Psoas muscle (tissue), 8 donors: ENCODE measurements at regions of chr6 and their contacts with region 1.

Region 1: GRCh38 chr6:7589949-7590917 is at the start of gene SNRNP48:
- DNase-seq: peak; percentile 94 to 97
- ATAC-seq: peak; percentile 100
- H3K4me3 ChIP-seq: peak within 1 kb of the TSS; percentile 90
- H3K27ac ChIP-seq: peak within 1 kb of the TSS; percentile 75
- H3K4me1 ChIP-seq: peaks cover 18% of the 10 kb centered on the region
- H3K27me3 ChIP-seq: no peaks in the 10 kb centered on the region
- CTCF ChIP-seq: no peak
- total RNA-seq, gene SNRNP48: 8.3 to 11.8 (median 10.1) TPM

Region 2: GRCh38 chr6:7285416-7285815 is 304.8 kb before region 1 on chr6:
- intact Hi-C with region 1: loop called in 1 of 2 experiments (anchors 5 kb)
- DNase-seq: no peak
- ATAC-seq: no peak
- H3K4me3 ChIP-seq: no peak overlapping the region
- H3K27ac ChIP-seq: no peak overlapping the region
- H3K4me1 ChIP-seq: no peaks in the 10 kb centered on the region
- H3K27me3 ChIP-seq: no peaks in the 10 kb centered on the region
- CTCF ChIP-seq: no peak

Region 3: DNA sequence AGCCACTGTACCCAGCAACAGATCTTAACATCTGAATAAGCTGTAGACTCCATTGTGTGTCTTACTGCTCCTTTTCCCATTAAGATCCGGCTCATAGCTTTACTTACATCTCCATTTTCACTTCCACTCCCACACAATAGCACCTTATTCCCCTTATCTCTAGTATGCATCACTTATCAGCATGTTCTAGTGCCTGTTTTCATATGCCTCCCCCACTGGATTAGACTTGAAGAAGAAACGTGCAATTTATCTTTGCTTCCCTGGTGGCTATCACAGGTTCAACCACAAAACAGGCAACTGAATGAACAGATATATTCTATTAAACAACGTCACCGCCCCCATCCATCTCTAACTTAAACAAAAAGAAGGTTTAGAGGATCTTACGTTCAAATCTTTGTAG is 289.3 kb before region 1 on chr6:
- intact Hi-C with region 1: no loop called
- DNase-seq: no peak
- ATAC-seq: no peak
- H3K4me3 ChIP-seq: no peak overlapping the region
- H3K27ac ChIP-seq: no peak overlapping the region
- H3K4me1 ChIP-seq: no peaks in the 10 kb centered on the region
- H3K27me3 ChIP-seq: no peaks in the 10 kb centered on the region
- CTCF ChIP-seq: no peak

Region 4: DNA sequence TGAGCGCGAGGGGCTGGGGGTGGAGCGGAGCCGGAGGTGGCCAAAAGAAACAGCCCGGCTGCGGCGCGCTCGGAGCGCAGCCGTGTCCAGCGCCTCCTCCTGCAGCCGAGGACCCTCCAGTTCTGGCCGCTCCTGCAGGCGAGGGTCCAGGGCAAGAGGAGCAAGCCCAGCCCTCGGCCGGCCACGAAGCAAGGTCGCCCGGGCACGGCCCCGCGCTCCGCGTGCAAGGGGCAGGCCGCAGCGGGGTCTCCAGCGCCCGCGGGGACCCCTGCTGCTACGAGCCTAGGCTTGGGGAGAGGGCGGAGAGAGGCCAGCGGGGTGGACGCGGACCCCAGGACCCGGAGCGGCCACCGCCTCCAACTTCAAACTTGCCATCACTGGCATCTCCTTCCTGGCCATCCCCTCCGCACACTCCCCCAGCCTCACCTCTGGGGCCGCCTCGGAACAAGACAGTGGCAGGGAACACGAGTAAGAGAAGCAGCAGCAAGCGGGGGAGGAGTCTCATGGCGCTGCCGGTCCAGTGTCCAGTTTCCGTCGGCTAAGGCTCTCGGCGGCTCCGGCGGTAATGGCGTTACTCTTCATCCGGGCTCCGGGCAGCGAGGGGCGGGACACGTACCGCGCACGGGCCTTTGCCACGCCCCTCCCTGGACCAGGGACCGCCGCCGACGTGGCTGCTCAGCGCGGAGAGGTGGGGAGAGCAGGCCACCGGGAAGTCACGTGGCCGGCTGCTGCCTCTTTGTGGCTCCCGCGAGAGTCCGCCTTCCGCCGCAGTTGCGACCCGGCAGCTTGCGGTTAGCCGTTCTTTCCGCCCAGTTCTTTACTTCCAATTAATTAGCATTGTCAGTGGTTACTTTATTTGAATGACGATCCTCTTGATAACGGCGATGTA is 277.4 kb before region 1 on chr6 and contains the start of gene SSR1:
- intact Hi-C with region 1: loop called in 1 of 2 experiments (anchors 10 kb)
- DNase-seq: peak; percentile 98 to 99
- ATAC-seq: peak; percentile 100
- H3K4me3 ChIP-seq: peak within 1 kb of the TSS; percentile 94
- H3K27ac ChIP-seq: peak within 1 kb of the TSS; percentile 90
- H3K4me1 ChIP-seq: peaks cover 20% of the 10 kb centered on the region
- H3K27me3 ChIP-seq: no peaks in the 10 kb centered on the region
- CTCF ChIP-seq: no peak
- total RNA-seq, gene SSR1: 29.9 to 37.3 (median 33.2) TPM

Region 5: GRCh38 chr6:7389451-7390225 is 200.6 kb before region 1 on chr6 and contains the starts of genes CAGE1 and RIOK1:
- intact Hi-C with region 1: loop called in 1 of 2 experiments (anchors 5 kb)
- DNase-seq: peak; percentile 97 to 98
- ATAC-seq: peak; percentile 99 to 100 (median 100)
- H3K4me3 ChIP-seq: peak within 1 kb of the TSS; percentile 96
- H3K27ac ChIP-seq: peak within 1 kb of the TSS; percentile 94
- H3K4me1 ChIP-seq: peaks cover 22% of the 10 kb centered on the region
- H3K27me3 ChIP-seq: no peaks in the 10 kb centered on the region
- CTCF ChIP-seq: peak; percentile 21
- total RNA-seq, gene CAGE1: not detected
- total RNA-seq, gene RIOK1: 8.5 to 26.1 (median 20.4) TPM

Region 6: DNA sequence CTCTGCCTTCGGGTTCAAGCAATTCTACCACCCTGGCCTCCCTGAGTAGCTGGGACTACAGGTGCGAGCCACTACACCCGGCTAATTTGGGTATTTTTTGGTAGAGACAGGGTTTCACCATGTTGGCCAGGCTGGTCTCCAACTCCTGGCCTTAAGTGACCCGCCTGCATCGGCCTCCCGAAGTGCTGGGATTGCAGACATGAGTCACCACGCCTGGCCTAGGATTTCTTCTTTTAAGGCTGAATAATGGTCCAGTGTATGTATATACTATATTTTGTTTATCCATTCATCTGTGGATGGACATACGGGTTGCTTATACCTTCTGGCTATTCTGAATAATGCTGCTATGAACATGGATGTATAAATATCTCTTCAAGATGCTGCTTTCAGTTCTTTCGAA is 183.5 kb before region 1 on chr6:
- intact Hi-C with region 1: loop called in 1 of 2 experiments (anchors 5 kb)
- DNase-seq: no peak
- ATAC-seq: no peak
- H3K4me3 ChIP-seq: no peak overlapping the region
- H3K27ac ChIP-seq: no peak overlapping the region
- H3K4me1 ChIP-seq: no peaks in the 10 kb centered on the region
- H3K27me3 ChIP-seq: no peaks in the 10 kb centered on the region
- CTCF ChIP-seq: no peak